Ascending aorta (tissue), 2 donors: ENCODE measurements at regions of chr1 and their contacts with region 1.

Region 1: GRCh38 chr1:179954493-179955297 is at the start of gene CEP350:
- DNase-seq: peak; percentile 91 to 99
- H3K4me3 ChIP-seq: peak within 1 kb of the TSS; percentile 81 to 94
- H3K27ac ChIP-seq: peak within 1 kb of the TSS; percentile 92 to 98
- H3K4me1 ChIP-seq: peaks cover 0 to 16% of the 10 kb centered on the region in 2 donors
- H3K27me3 ChIP-seq: no peaks in the 10 kb centered on the region
- CTCF ChIP-seq: no peak
- total RNA-seq, gene CEP350: 37.8 TPM

Region 2: GRCh38 chr1:179867807-179868330 is 86.8 kb before region 1 on chr1:
- intact Hi-C with region 1: no loop called
- DNase-seq: no peak
- H3K4me3 ChIP-seq: no peak overlapping the region
- H3K27ac ChIP-seq: no peak overlapping the region
- H3K4me1 ChIP-seq: peaks cover 0 to 6% of the 10 kb centered on the region in 2 donors
- H3K27me3 ChIP-seq: no peaks in the 10 kb centered on the region
- CTCF ChIP-seq: peak in 2 of 3 experiments; percentile 30 to 57

Region 3: GRCh38 chr1:179968994-179969919 is 14.6 kb after region 1 on chr1:
- intact Hi-C with region 1: loop called (anchors 2 kb)
- DNase-seq: no peak
- H3K4me3 ChIP-seq: peak overlapping the region; percentile 17 to 19
- H3K27ac ChIP-seq: peak overlapping the region; percentile 78 to 85
- H3K4me1 ChIP-seq: peaks cover 9 to 36% of the 10 kb centered on the region in 2 donors
- H3K27me3 ChIP-seq: no peaks in the 10 kb centered on the region
- CTCF ChIP-seq: no peak

Region 4: GRCh38 chr1:180027949-180028445 is 73.3 kb after region 1 on chr1:
- intact Hi-C with region 1: loop called (anchors 2 kb)
- DNase-seq: no peak
- H3K4me3 ChIP-seq: no peak overlapping the region
- H3K27ac ChIP-seq: no peak overlapping the region
- H3K4me1 ChIP-seq: no peaks in the 10 kb centered on the region
- H3K27me3 ChIP-seq: no peaks in the 10 kb centered on the region
- CTCF ChIP-seq: no peak

Region 5: GRCh38 chr1:180154325-180155181 is 199.9 kb after region 1 on chr1 and contains the start of gene QSOX1:
- intact Hi-C with region 1: loop called (anchors 10 kb)
- DNase-seq: peak; percentile 59 to 93
- H3K4me3 ChIP-seq: peak within 1 kb of the TSS; percentile 82 to 85
- H3K27ac ChIP-seq: peak within 1 kb of the TSS; percentile 82 to 85
- H3K4me1 ChIP-seq: peaks cover 4 to 17% of the 10 kb centered on the region in 2 donors
- H3K27me3 ChIP-seq: no peaks in the 10 kb centered on the region
- CTCF ChIP-seq: peak in 2 of 3 experiments; percentile 12 to 37
- total RNA-seq, gene QSOX1: 200 TPM